Motor neuron (in vitro differentiated cells): ENCODE measurements at regions of chr5 and their contacts with region 1.

Region 1: GRCh38 chr5:68007451-68007850 is 208.1 kb upstream of the PIK3R1 start:
- ATAC-seq: peak in 2 of 8 experiments; percentile 34 to 47
- H3K4me3 ChIP-seq: no peak overlapping the region
- H3K27ac ChIP-seq: no peak overlapping the region
- H3K4me1 ChIP-seq: no peaks in the 10 kb centered on the region

Region 2: GRCh38 chr5:68141494-68141893 is 134.0 kb after region 1 on chr5:
- in situ Hi-C with region 1: no loop called
- ATAC-seq: no peak
- H3K4me3 ChIP-seq: no peak overlapping the region
- H3K27ac ChIP-seq: no peak overlapping the region
- H3K4me1 ChIP-seq: no peaks in the 10 kb centered on the region

Region 3: GRCh38 chr5:68252673-68253623 is 245.5 kb after region 1 on chr5:
- in situ Hi-C with region 1: loop called in 1 of 9 experiments (anchors 25 kb)
- ATAC-seq: peak; percentile 71 to 90 (median 78)
- H3K4me3 ChIP-seq: no peak overlapping the region
- H3K27ac ChIP-seq: no peak overlapping the region
- H3K4me1 ChIP-seq: peaks cover 23 to 24% of the 10 kb centered on the region in 2 donors

Region 4: DNA sequence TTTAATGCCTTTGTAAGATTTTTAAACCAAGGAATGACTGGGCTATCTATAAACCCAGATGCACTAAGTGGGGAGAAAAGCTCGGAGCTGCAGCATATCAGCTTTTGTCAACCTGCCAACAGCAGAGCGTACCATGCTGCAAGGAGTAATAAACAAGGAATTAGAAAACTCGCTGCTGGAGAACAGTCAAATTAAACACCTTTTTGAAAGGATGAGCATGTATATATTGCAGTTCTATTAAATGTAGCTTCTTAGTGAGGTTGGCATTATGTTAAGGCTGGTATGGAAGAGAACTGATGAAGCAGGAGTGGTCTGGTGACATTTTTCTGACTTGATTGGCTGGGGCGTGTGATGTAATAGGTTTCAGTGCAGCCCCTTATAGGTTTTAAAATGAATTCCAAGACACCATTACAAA is 282.8 kb after region 1 on chr5:
- in situ Hi-C with region 1: no loop called
- ATAC-seq: peak in 5 of 8 experiments; percentile 40 to 59 (median 47)
- H3K4me3 ChIP-seq: peak overlapping the region; percentile 42 to 56 (median 46)
- H3K27ac ChIP-seq: peak overlapping the region; percentile 59 to 89
- H3K4me1 ChIP-seq: peaks cover 11 to 18% of the 10 kb centered on the region in 2 donors